ENCODE measurements at regions of chr2 and their contacts with region 1.

Region 1: DNA sequence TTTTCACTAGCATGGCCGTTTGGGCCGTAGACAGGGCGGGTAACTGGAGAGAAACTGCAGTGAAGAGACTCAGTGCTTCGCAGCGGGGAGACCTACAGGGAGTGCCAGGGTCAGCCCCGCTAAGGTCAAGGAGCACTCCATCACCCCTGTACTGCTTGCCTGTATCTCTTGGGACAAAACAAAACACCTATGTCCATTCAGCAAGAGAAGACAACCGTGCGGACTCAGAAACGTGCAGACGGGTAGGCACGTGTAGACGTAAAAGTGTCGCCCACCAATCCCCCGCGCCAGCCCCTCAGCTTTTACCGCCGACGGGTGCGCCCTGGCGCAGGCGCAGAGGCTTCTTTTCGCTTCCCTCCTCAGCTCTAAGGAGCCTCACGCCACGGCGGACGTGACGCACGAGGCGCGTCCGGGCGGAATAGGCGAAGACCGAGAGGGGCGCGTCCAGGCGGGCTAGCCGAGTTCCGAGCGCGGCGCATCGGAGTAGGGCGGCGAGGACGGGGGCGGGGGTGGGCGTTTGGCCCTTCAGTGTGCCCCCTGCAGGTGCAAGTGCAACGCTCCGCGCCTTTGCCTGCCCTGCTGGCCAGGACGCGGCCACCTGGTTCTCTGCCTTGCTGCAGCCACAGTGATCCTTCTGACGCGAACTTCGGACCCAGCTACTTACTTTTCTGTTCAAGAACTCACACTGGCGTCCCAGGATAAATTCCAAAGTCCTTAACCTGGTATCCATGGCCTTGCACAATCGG is 3.3 kb upstream of the SOS1 start:
- DNase-seq: peak; percentile 98 to 99
- ATAC-seq: peak; percentile 97
- H3K4me3 ChIP-seq: peak overlapping the region; percentile 76 to 80
- H3K27ac ChIP-seq: peak overlapping the region; percentile 67 to 83
- H3K4me1 ChIP-seq: peaks cover 0 to 4% of the 10 kb centered on the region in 2 donors
- H3K27me3 ChIP-seq: no peaks in the 10 kb centered on the region

Region 2: GRCh38 chr2:39059366-39059952 is 64.7 kb before region 1 on chr2:
- intact Hi-C with region 1: loop called in 1 of 2 experiments (anchors 5 kb)
- DNase-seq: no peak
- ATAC-seq: no peak
- H3K4me3 ChIP-seq: no peak overlapping the region
- H3K27ac ChIP-seq: no peak overlapping the region
- H3K4me1 ChIP-seq: peaks cover 0 to 2% of the 10 kb centered on the region in 2 donors
- H3K27me3 ChIP-seq: no peaks in the 10 kb centered on the region

Region 3: DNA sequence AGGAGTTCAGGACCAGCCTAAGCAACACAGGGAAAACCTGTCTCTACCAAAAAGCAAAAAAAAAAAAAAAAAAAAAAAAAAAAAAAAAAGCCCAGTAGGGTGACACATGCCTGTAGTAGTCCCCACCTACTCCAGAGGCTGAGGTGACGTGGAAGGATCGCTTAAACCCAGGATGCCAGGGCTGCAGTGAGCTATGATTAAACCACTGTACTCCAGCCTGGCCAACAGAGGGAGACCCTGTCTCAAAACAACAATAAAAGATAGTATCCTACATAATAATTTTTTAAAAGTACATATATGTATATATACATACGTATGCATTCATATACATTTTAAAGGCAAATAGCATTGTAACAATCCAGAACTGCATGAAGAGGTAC is 55.0 kb before region 1 on chr2:
- intact Hi-C with region 1: loop called in 1 of 2 experiments (anchors 5 kb)
- DNase-seq: no peak
- ATAC-seq: no peak
- H3K4me3 ChIP-seq: no peak overlapping the region
- H3K27ac ChIP-seq: no peak overlapping the region
- H3K4me1 ChIP-seq: peaks cover 0 to 5% of the 10 kb centered on the region in 2 donors
- H3K27me3 ChIP-seq: no peaks in the 10 kb centered on the region

Region 4: GRCh38 chr2:39156107-39156506 is 31.9 kb after region 1 on chr2:
- intact Hi-C with region 1: loop called (anchors 2 to 5 kb)
- DNase-seq: no peak
- ATAC-seq: peak; percentile 69
- H3K4me3 ChIP-seq: no peak overlapping the region
- H3K27ac ChIP-seq: no peak overlapping the region
- H3K4me1 ChIP-seq: peaks cover 0 to 2% of the 10 kb centered on the region in 2 donors
- H3K27me3 ChIP-seq: no peaks in the 10 kb centered on the region

Region 5: DNA sequence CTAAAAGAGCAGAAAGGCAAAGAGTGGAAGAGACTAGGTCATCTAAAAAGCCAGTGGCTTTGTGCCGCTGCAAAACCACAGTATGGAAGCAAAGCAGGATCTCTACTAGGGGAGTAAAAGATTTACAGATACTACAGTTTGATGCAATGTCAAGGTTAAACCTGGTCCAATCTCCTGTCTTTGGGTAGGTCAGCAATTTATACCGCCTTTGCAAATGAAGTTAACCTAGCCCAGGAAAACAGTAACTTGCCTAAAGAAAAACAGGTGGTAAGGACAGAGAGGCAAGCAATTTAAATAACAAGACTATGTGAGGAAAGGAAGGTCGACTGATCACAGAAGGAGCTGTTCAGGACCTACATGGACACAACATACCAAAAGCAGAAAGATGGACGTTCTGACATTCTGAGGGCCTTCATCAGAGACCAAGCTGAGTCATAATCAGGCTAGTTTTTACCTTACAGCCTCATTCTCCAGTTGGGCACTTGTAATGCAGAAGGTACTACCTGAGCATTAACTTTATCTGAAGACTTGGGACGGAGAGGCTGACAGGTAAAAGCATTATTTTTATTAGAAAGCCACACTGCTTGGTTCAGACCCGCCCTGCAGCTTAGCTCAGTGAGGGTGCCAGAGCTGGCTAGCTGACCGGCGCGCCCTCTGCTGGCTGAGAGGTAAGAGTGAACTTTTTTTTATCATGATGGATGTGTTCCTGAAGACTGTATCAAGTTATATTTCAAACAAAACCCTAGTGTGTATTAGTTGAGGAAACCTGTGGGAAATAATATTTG is 103.6 kb after region 1 on chr2:
- intact Hi-C with region 1: loop called (anchors 1 kb)
- DNase-seq: peak; percentile 85 to 93
- ATAC-seq: peak; percentile 91
- H3K4me3 ChIP-seq: no peak overlapping the region
- H3K27ac ChIP-seq: no peak overlapping the region
- H3K4me1 ChIP-seq: no peaks in the 10 kb centered on the region
- H3K27me3 ChIP-seq: no peaks in the 10 kb centered on the region

Region 6: GRCh38 chr2:39728941-39729351 is 604.8 kb after region 1 on chr2:
- intact Hi-C with region 1: no loop called
- DNase-seq: no peak
- ATAC-seq: no peak
- H3K4me3 ChIP-seq: no peak overlapping the region
- H3K27ac ChIP-seq: no peak overlapping the region
- H3K4me1 ChIP-seq: peaks cover 6 to 12% of the 10 kb centered on the region in 2 donors
- H3K27me3 ChIP-seq: peaks cover 0 to 1% of the 10 kb centered on the region in 2 donors